A673 (cell line): ENCODE measurements at regions of chr6 and their contacts with region 1.

Region 1: DNA sequence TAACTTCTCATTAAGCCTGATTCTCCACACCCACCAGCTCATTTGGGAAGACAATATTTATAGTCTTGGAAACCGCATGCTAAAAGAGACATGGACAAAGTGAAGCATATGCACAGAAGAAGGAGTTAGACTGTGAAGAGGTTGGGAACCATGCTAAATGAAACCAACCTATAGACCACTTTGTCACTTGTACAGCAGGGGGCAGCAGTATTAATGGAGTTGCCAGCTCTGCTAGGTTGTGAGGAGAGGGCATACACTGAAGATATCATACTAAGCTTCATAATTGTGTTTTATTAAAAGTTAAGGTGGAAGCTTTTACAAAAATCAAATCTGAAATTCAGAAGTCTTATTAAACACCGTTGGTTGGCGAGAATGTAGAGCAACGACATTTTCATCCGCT is 38.3 kb upstream of the HMGCLL1 start:
- DNase-seq: peak; percentile 74
- H3K4me3 ChIP-seq: no peak overlapping the region
- H3K27ac ChIP-seq: no peak overlapping the region
- H3K4me1 ChIP-seq: no peaks in the 10 kb centered on the region
- H3K27me3 ChIP-seq: no peaks in the 10 kb centered on the region
- CTCF ChIP-seq: peak; percentile 83

Region 2: GRCh38 chr6:55886185-55886836 is 269.0 kb after region 1 on chr6:
- CTCF ChIA-PET with region 1: interaction called, 4 read pairs
- POLR2A ChIA-PET with region 1: no interaction called
- intact Hi-C with region 1: loop called (anchors 1 kb)
- DNase-seq: peak; percentile 39
- H3K4me3 ChIP-seq: no peak overlapping the region
- H3K27ac ChIP-seq: no peak overlapping the region
- H3K4me1 ChIP-seq: peaks cover 14% of the 10 kb centered on the region
- H3K27me3 ChIP-seq: no peaks in the 10 kb centered on the region
- CTCF ChIP-seq: peak; percentile 66

Region 3: GRCh38 chr6:55902796-55903195 is 285.5 kb after region 1 on chr6:
- CTCF ChIA-PET with region 1: no interaction called
- POLR2A ChIA-PET with region 1: no interaction called
- intact Hi-C with region 1: no loop called
- DNase-seq: no peak
- H3K4me3 ChIP-seq: no peak overlapping the region
- H3K27ac ChIP-seq: no peak overlapping the region
- H3K4me1 ChIP-seq: no peaks in the 10 kb centered on the region
- H3K27me3 ChIP-seq: no peaks in the 10 kb centered on the region
- CTCF ChIP-seq: no peak

Region 4: DNA sequence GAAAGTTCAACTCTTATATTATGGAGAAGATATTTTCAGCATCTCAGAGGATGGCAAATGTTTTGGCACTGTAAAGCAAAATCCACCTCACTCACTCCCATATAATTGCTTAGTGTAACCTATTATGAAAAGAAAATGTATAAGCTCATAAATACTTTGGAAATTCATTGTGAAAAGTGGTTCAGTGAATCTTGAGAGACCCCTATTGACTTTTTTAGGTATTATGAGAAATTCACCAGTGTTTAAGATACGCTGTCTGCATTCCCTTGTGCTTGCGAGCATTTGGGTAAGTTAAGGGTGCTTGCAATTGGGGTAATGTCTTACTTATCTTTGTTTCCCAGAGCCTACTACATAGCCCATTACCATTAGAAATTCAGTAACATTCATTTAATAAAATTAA is 324.4 kb after region 1 on chr6:
- CTCF ChIA-PET with region 1: interaction called, 12 read pairs
- POLR2A ChIA-PET with region 1: no interaction called
- intact Hi-C with region 1: no loop called
- DNase-seq: peak; percentile 40
- H3K4me3 ChIP-seq: no peak overlapping the region
- H3K27ac ChIP-seq: no peak overlapping the region
- H3K4me1 ChIP-seq: no peaks in the 10 kb centered on the region
- H3K27me3 ChIP-seq: no peaks in the 10 kb centered on the region
- CTCF ChIP-seq: peak; percentile 51; the same call in 1 of the 2 replicates

Region 5: GRCh38 chr6:55953335-55953734 is 336.1 kb after region 1 on chr6:
- CTCF ChIA-PET with region 1: no interaction called
- POLR2A ChIA-PET with region 1: no interaction called
- intact Hi-C with region 1: loop called (anchors 5 kb)
- DNase-seq: peak; percentile 60
- H3K4me3 ChIP-seq: peak overlapping the region; percentile 23
- H3K27ac ChIP-seq: no peak overlapping the region
- H3K4me1 ChIP-seq: peaks cover 22% of the 10 kb centered on the region
- H3K27me3 ChIP-seq: no peaks in the 10 kb centered on the region
- CTCF ChIP-seq: peak; percentile 62

Region 6: DNA sequence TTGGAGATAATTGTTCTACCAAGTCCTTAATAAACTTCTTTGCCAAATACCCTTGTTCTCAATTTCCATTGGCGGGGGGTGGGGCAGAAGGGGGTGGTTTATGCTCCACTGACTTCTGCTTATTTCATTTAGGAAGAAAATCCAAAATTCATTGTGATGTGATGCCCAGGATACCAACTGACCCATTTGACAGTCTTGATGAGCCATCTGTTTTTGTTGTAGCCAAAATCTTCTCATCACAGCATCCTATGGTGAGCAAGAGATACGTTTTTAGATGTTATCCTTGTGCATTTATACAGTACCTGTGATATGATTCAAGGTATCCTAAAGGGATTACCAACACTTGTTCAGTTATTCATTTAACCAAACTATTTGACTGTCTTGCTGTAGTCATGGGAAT is 366.6 kb after region 1 on chr6:
- CTCF ChIA-PET with region 1: no interaction called
- POLR2A ChIA-PET with region 1: no interaction called
- intact Hi-C with region 1: no loop called
- DNase-seq: no peak
- H3K4me3 ChIP-seq: no peak overlapping the region
- H3K27ac ChIP-seq: no peak overlapping the region
- H3K4me1 ChIP-seq: peaks cover 25% of the 10 kb centered on the region
- H3K27me3 ChIP-seq: no peaks in the 10 kb centered on the region
- CTCF ChIP-seq: no peak